SK-N-SH (cell line): ENCODE measurements at regions of chr17 and their contacts with region 1.

Region 1: DNA sequence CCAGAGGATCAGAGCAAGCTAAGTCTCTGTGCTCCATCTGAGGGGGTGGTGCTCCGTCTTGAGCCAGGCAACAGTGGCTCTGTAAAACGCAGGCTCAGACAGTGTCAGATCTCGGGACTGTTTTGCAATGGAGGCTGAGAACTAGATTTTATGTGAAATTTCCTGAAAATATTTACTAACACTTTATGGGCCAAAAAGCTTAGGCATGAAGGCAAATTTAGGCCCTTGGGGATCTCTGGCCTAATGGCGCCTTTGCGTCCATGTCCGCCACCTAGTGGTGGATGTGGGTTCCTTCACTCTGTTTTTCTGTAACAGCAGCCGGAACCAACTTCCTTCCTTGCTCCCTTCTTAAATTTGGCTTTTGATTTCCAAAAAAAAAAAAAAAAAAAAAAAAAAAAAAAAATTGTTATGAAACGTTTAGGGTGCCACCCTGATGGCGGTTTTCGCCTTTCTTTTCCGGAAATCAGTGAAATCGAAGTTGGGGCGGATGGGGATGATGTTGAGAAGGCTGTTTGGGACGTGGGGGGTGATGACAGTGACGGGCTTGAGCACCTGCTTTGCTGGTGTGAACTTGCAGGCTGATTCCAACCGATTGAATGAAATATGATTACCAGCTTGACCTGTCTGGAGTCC is 14.0 kb upstream of the ELAC2 start:
- DNase-seq: peak; percentile 48
- H3K4me3 ChIP-seq: no peak overlapping the region; a peak in 1 of 4 replicates
- H3K27ac ChIP-seq: no peak overlapping the region
- H3K4me1 ChIP-seq: no peaks in the 10 kb centered on the region
- H3K27me3 ChIP-seq: no peaks in the 10 kb centered on the region; the same call in 1 of the 2 replicates
- CTCF ChIP-seq: peak; percentile 82
- EP300 ChIP-seq: no peak
- RAD21 ChIP-seq: peak; percentile 42

Region 2: GRCh38 chr17:12896145-12896786 is 135.6 kb before region 1 on chr17:
- CTCF ChIA-PET with region 1: no interaction called
- POLR2A ChIA-PET with region 1: no interaction called
- DNase-seq: no peak
- H3K4me3 ChIP-seq: no peak overlapping the region
- H3K27ac ChIP-seq: no peak overlapping the region
- H3K4me1 ChIP-seq: no peaks in the 10 kb centered on the region
- H3K27me3 ChIP-seq: no peaks in the 10 kb centered on the region; the same call in 1 of the 2 replicates
- CTCF ChIP-seq: no peak
- EP300 ChIP-seq: no peak
- RAD21 ChIP-seq: no peak

Region 3: DNA sequence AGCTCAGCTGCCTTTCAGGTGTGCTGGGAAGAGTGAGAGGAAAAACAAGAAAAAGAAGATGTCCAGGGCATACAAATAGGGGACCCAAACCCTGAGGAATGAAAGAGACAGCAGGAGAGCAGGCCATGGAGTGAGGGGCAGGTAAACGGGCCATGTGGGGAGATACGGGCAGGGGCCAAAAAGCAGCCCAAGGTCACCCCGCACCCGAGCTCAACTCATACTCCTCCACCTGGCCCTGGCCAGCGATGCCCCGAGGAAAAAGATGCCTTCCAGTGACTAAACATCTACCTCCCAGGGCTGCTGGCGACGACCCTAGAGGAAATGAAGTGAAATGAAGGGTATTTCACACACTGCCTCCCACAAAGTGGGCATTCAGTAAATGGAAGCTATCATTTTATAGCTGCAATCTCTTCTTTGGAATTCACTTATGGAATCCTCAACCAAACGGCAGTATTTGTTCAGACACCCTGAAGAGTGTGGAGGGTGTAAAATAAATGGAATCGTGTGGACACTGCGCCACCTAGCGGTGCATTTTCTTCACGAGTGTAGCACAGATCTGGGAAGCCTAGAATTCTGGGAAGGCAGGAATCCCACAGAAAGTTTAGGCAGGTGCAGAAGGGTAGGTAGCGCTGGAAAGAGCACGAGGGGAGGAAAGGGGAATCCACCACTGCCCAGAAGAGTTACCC is 28.9 kb before region 1 on chr17:
- CTCF ChIA-PET with region 1: interaction called, 15 read pairs
- POLR2A ChIA-PET with region 1: no interaction called
- DNase-seq: peak; percentile 78
- H3K4me3 ChIP-seq: no peak overlapping the region
- H3K27ac ChIP-seq: no peak overlapping the region
- H3K4me1 ChIP-seq: no peaks in the 10 kb centered on the region
- H3K27me3 ChIP-seq: no peaks in the 10 kb centered on the region
- CTCF ChIP-seq: peak; percentile 92
- EP300 ChIP-seq: no peak
- RAD21 ChIP-seq: peak; percentile 78

Region 4: DNA sequence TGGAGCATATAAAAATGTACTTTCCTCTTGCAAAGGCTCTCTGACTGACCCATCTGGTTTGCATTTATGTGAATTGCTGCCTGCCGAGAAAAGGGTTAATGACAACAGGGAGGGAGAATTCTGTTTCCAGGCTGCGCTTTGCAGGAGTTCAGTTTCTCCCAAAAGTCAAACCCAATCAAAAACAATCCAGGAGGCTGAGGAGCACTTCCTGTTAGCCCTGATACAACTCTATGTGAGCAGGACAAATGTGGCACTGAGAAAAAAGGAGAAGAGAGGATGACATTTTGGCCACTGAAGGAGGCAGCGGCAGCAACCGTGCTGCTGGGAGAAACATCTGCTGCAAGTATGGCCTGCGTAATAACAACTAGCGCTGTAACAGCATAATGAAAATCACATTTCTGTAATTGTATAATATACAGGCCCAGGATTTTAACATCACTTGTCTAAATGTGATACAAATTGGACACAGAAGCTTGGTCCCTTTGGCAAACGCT is 12.8 kb after region 1 on chr17:
- CTCF ChIA-PET with region 1: interaction called, 119 read pairs
- POLR2A ChIA-PET with region 1: no interaction called
- DNase-seq: peak; percentile 55
- H3K4me3 ChIP-seq: no peak overlapping the region
- H3K27ac ChIP-seq: peak overlapping the region in 1 of 2 experiments; percentile 90; a peak in 2 of 4 replicates
- H3K4me1 ChIP-seq: peaks cover 0 to 12% of the 10 kb centered on the region in 2 experiments; a peak in 2 of 4 replicates
- H3K27me3 ChIP-seq: peaks cover 31% of the 10 kb centered on the region
- CTCF ChIP-seq: no peak
- EP300 ChIP-seq: peak in 1 of 2 experiments; percentile 88; a peak in 1 of 4 replicates
- RAD21 ChIP-seq: no peak

Region 5: GRCh38 chr17:13114601-13115031 is 82.8 kb after region 1 on chr17:
- CTCF ChIA-PET with region 1: interaction called, 38 read pairs
- POLR2A ChIA-PET with region 1: no interaction called
- DNase-seq: peak; percentile 69
- H3K4me3 ChIP-seq: peak overlapping the region in 1 of 2 experiments; percentile 38; a peak in 1 of 4 replicates
- H3K27ac ChIP-seq: no peak overlapping the region
- H3K4me1 ChIP-seq: no peaks in the 10 kb centered on the region; a peak in 1 of 4 replicates
- H3K27me3 ChIP-seq: peaks cover 40% of the 10 kb centered on the region
- CTCF ChIP-seq: peak; percentile 77
- EP300 ChIP-seq: no peak
- RAD21 ChIP-seq: peak; percentile 73

Region 6: DNA sequence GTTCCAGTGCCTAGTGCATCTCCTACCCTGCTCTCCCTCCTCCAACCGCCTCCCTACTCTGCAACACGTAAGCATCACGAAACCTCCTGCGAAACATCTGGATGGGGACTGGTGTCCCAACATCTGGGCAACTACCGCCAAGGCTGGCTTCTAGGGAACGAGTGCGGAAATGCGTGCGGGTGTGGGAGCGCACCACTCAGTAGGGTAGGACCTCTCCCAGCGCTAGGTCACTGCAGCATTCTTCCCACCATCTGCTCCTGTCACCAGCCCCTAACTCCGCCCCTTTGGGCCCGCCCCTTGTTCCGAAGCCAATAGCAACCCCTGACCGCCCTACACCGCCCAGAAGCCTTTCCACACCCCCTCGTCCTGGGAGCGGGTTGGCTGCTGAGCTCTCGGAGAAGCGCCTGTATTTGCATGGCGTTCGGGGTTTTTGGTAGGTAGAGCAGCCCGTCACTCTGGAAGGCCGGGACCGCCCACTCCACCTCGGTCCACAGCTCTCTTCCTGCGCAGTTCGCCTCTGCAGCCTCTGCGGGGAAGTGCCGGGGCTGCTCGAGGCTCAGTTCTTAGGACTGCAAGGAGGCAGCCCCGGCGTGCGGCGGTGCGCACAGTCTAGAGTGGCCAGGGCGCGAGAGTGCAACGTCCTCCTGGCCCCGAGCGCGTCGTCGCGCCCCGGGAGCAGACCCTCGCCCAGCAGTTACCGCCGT is 1268.9 kb after region 1 on chr17 and contains the start of gene HS3ST3B1:
- CTCF ChIA-PET with region 1: interaction called, 20 read pairs
- POLR2A ChIA-PET with region 1: no interaction called
- DNase-seq: peak; percentile 93
- H3K4me3 ChIP-seq: peak within 1 kb of the TSS; percentile 54 to 78
- H3K27ac ChIP-seq: no peak within 1 kb of the TSS; a peak in 1 of 4 replicates
- H3K4me1 ChIP-seq: peaks cover 0 to 23% of the 10 kb centered on the region in 2 experiments; a peak in 2 of 4 replicates
- H3K27me3 ChIP-seq: peaks cover 43% of the 10 kb centered on the region
- CTCF ChIP-seq: no peak
- EP300 ChIP-seq: no peak
- RAD21 ChIP-seq: no peak
- polyA plus RNA-seq, gene HS3ST3B1: 0.55 and 0.67 TPM in 2 replicates